GM23248 (cell line): ENCODE measurements at regions of chr11 and their contacts with region 1.

Region 1: GRCh38 chr11:44977476-44977984 is 26.8 kb upstream of the TP53I11 start:
- DNase-seq: no peak
- H3K4me3 ChIP-seq: no peak overlapping the region
- H3K27ac ChIP-seq: no peak overlapping the region
- H3K4me1 ChIP-seq: no peaks in the 10 kb centered on the region
- H3K27me3 ChIP-seq: peaks cover 7% of the 10 kb centered on the region

Region 2: GRCh38 chr11:44927174-44927661 is 50.3 kb before region 1 on chr11:
- in situ Hi-C with region 1: loop called (anchors 5 kb)
- DNase-seq: peak; percentile 83
- H3K4me3 ChIP-seq: no peak overlapping the region
- H3K27ac ChIP-seq: no peak overlapping the region
- H3K4me1 ChIP-seq: no peaks in the 10 kb centered on the region
- H3K27me3 ChIP-seq: 0 out of 2 replicates have a peak, but pooled peaks cover 3% of the 10 kb centered on the region